Prostate gland (tissue), 2 donors: ENCODE measurements at regions of chr9 and their contacts with region 1.

Region 1: DNA sequence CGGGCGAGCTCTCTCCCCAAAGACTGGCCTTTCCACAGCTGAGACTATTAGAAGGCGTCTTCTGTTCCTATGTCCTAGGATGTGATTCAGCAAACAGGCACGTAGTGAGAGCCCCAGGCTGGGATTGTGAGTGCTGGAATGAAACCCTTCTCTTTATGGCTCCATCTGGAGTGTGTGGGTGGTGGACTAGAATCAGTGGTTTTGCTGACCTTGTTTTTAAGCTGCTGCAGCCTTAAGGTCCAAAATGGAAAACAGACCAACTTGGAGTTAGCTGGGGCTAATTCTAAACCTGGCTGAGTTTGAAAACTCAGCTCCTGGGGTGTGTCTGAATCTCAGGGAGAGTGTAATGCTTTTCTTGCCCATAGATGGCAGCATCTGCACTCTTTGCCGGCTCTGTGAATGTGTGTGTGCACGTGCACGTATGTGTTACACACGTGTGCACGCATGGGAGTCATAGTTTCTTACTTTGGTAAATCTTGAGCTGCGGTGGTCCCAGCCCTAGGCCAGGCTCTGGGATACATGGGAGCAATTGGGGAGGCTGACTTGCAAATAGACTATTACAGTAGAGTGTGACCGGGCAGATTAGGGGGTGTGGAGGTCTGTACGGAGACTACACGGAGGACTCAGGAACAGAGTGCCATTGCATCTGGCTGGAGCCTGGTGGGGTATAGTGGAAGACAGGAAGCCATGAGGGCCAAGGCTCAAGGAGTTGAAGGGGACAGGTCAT is 10.7 kb downstream of the GSN start:
- DNase-seq: peak; percentile 39
- H3K4me3 ChIP-seq: no peak overlapping the region
- H3K27ac ChIP-seq: peak overlapping the region; percentile 85 to 90
- H3K4me1 ChIP-seq: no peaks in the 10 kb centered on the region
- H3K27me3 ChIP-seq: no peaks in the 10 kb centered on the region
- CTCF ChIP-seq: peak; percentile 45 to 90 (median 71)
- POLR2A ChIP-seq: peak; percentile 35

Region 2: DNA sequence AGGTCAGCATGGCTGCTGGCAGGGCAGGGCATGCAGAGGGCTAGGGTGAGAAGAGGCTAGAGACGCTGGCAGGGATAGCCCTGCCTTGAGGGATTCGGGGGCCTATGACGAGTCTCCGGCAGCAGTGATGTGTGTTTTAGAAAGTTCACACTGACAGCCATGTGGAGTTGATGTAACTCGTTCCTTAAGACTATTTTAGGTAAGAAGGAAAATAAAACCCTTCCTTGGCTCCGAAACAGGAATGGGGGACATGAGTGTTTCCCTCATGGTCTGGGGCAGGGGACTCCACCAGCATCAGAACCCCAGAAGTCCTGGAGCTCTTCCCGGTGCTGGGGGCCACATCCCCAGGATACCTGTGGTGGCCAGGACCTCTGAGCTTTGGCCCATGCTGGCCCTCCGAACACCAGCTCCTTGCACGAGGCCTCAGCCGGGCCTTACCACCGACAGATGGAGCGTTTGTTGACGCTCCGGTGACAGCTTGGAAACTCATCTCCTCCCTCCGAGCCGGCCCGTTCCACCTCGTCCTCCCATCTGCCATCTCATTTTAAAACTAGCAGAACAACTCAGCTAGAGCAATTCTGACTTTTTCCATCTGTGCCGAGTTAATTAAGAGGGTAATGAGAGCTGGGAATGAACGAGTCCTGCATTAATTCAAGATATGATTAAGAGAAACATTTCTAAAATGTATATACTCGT is 1036.4 kb before region 1 on chr9:
- intact Hi-C with region 1: no loop called
- DNase-seq: no peak
- H3K4me3 ChIP-seq: no peak overlapping the region
- H3K27ac ChIP-seq: no peak overlapping the region
- H3K4me1 ChIP-seq: no peaks in the 10 kb centered on the region
- H3K27me3 ChIP-seq: no peaks in the 10 kb centered on the region
- CTCF ChIP-seq: no peak
- POLR2A ChIP-seq: no peak

Region 3: GRCh38 chr9:121023064-121023463 is 255.6 kb before region 1 on chr9:
- intact Hi-C with region 1: no loop called
- DNase-seq: no peak
- H3K4me3 ChIP-seq: no peak overlapping the region
- H3K27ac ChIP-seq: no peak overlapping the region
- H3K4me1 ChIP-seq: no peaks in the 10 kb centered on the region
- H3K27me3 ChIP-seq: no peaks in the 10 kb centered on the region
- CTCF ChIP-seq: no peak
- POLR2A ChIP-seq: no peak

Region 4: DNA sequence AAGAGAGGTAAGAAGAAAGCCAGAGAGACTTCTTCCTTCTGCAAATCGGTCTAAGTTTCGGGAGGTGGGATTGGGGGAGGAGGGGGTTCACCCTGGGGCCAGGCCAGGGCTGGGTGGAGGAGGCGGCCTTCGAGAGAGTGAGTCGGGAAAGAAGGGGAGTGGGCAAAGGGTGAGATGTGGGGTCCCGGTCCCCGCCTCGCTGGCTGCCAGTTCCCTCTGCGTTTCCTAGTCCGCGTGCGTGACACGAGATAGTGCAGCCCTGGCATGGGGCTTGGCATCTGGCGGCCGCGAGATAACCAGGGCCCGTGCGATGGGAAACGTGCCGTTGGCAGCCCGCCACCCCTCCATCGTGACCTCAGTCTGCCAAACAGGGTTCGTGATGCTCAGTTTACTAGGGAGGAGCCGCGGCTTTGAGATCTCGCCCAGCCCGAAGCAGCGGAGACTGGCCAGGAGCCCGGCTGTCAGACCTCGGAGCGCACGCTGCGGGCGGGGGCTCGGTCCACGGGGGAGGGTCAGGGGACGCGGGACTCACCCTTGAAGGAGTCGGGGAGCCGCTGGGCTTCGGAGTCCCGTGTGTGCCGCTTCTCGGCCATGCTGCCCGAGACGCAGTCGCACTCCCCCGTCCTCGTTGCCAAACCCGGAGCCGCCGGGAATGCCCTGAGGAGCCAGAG is 91.0 kb after region 1 on chr9 and contains the start of gene STOM:
- intact Hi-C with region 1: loop called (anchors 5 kb)
- DNase-seq: peak; percentile 69
- H3K4me3 ChIP-seq: peak within 1 kb of the TSS; percentile 37 to 48
- H3K27ac ChIP-seq: peak within 1 kb of the TSS; percentile 88 to 90
- H3K4me1 ChIP-seq: no peaks in the 10 kb centered on the region
- H3K27me3 ChIP-seq: no peaks in the 10 kb centered on the region
- CTCF ChIP-seq: peak in 1 of 4 experiments; percentile 5
- POLR2A ChIP-seq: peak; percentile 97
- total RNA-seq, gene STOM: 64.3 to 85.1 TPM